ENCODE measurements at regions of chr5 and their contacts with region 1.

Region 1: GRCh38 chr5:179495906-179496455 is 54.4 kb upstream of the RUFY1 start:
- H3K4me3 Mint-ChIP-seq: no peak overlapping the region
- H3K27ac Mint-ChIP-seq: no peak overlapping the region
- H3K4me1 Mint-ChIP-seq: peaks cover 5% of the 10 kb centered on the region
- H3K27me3 Mint-ChIP-seq: peaks cover 10% of the 10 kb centered on the region

Region 2: DNA sequence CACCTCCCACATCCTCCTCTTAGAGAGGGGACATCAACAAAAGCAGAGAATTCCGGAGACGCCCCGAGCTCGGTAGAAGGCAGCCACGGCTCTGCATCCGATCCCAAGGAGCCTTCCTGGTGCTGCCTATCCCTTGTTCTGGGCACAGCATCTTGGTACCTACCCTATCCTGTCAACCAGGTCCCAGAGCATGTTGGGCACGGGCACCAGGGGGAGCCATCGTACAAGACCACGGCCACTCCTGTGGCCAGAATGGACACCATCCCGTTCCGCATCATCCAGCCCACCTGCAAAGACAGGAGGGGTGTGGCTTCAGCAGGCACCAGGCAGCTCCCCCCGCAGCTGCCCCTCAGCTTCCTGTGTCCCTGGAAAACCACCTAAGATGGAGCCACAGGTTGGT is 702.8 kb before region 1 on chr5:
- intact Hi-C with region 1: loop called (anchors 5 kb)
- H3K4me3 Mint-ChIP-seq: no peak overlapping the region
- H3K27ac Mint-ChIP-seq: no peak overlapping the region
- H3K4me1 Mint-ChIP-seq: peaks cover 7% of the 10 kb centered on the region
- H3K27me3 Mint-ChIP-seq: peaks cover 2% of the 10 kb centered on the region

Region 3: DNA sequence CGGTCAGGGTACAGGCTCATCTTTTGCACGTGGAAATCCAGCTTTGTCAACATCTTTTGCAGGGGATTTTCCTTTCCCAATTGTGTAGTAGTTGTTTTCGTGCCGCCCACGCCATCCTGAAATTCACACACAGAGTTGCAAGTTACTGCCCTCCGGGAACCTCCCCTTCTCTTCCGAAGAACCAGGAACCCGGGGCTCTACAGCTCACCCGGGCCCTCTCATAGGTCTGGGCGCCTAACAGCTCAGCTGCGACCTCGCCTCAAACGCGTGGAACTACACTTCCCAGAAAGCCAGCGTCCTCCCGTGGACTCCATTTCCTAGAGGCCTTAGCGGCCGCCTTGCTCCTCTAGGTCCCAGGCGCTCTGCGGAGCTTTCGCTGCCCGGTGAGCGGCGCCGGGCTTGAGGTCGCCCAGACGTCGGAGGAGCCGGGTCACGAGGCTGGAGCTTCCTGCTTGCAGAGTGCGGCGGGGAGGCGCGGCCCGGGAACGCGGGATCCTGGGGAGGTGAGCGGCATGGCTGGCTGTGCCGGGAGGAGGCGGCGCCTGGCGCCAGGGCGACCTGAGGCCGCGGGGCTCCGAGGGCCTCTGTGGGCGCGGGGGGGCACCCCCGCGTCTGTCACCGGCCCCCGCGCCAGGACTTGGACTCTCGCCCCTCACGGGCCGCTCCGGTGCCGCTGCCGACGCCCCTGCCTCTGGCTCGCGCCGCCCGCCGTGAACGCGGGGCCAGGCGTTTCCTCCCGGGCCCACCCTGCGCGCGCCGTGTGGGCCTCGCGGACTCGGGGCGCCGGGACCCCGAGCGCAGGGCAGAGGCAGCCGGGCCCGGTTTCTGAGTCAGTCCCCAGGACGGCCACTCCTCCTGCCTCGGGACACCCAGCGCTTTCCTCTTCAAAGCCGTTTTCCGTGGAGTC is 636.1 kb before region 1 on chr5 and contains the start of gene ZNF354B:
- intact Hi-C with region 1: loop called (anchors 2 kb)
- H3K4me3 Mint-ChIP-seq: peak within 1 kb of the TSS; percentile 90
- H3K27ac Mint-ChIP-seq: peak within 1 kb of the TSS; percentile 87
- H3K4me1 Mint-ChIP-seq: peaks cover 21% of the 10 kb centered on the region
- H3K27me3 Mint-ChIP-seq: no peaks in the 10 kb centered on the region

Region 4: DNA sequence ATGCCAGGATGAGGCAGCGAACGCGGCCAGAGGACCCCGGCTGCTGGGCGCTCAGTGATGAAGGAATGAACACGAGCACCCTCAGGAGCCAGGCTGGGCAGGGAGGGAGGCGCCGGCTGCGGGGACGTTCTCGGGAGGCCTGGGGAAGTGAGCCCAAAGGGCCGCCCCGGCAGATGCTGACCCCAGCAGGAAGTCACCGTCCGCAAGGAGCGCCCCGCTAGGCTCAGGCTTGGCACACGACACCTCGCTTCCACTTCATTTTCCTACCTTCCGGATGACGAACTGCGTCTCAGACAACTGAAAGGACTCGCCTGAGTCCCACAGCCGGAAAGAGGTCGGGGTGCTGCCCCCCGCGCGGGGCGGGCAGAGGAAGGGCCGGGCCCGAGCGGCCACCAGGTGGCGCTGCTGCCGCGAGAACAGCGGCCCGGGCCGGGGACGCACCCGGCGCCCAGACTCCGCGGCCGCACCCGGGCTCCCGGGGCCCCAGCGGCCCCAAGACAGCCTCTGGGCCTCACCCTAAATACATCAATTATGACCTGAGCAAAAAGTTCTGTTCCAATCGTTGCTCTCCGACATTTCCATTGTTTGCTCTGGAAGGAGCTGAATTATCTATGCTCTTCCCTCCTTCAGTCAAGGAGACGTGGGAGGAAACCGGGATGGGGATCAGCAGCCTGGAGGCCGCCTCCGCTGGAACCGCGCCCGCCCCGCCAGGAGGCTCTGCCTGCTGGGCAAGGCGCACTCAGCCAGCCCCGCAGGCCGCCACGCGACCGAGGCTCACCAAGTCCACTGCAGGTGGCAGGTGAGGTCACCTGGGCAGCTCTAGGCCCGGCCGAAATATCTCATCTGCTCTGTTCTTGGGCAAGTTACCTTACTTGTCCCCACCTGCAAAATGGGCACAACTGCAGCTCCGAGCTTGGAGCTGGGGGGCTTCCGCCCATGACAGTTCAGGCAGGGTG is 328.8 kb before region 1 on chr5:
- intact Hi-C with region 1: loop called (anchors 1 kb)
- H3K4me3 Mint-ChIP-seq: peak overlapping the region; percentile 70
- H3K27ac Mint-ChIP-seq: no peak overlapping the region
- H3K4me1 Mint-ChIP-seq: peaks cover 5% of the 10 kb centered on the region
- H3K27me3 Mint-ChIP-seq: peaks cover 18% of the 10 kb centered on the region

Region 5: DNA sequence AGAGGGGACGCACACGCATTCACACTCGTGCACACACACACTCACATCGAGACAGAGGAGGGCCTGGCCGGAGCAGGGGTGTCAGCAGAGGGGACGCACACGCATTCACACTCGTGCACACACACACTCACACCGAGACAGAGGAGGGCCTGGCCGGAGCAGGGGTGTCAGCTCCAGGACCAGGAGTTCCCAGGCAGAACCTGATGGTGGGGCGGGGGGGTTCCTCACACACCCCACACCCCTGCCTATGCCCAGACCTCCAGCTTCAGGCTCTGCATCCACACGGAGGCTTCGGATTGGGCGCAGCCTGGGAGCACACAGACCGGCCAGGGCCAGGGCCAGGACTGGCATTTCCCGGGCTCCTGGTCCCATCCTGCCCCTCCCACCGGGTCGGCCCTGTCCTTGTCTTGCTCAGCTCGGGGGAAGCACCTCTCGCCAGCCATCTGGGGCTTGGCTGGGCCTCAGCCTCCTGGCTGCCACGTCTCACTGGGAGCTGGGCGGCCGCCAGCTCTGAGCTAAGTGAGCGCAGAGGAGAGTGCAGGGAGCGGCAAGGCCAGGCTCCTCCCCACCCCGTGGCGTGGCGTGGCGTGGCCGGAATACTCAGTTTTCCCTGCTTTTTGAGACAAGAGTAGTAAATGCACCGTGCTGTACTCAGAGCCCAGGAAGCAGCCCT is 182.0 kb before region 1 on chr5:
- intact Hi-C with region 1: no loop called
- H3K4me3 Mint-ChIP-seq: no peak overlapping the region
- H3K27ac Mint-ChIP-seq: no peak overlapping the region
- H3K4me1 Mint-ChIP-seq: no peaks in the 10 kb centered on the region
- H3K27me3 Mint-ChIP-seq: no peaks in the 10 kb centered on the region

Measured in dendritic cell treated with granulocyte-macrophage colony-stimulating factor and Interleukin-4, amounts not matched to agents 40 ng/mL and 50 ng/mL, for 4 days (primary cell).